Astrocyte of the cerebellum (primary cell): ENCODE measurements at regions of chr11 and their contacts with region 1.

Region 1: DNA sequence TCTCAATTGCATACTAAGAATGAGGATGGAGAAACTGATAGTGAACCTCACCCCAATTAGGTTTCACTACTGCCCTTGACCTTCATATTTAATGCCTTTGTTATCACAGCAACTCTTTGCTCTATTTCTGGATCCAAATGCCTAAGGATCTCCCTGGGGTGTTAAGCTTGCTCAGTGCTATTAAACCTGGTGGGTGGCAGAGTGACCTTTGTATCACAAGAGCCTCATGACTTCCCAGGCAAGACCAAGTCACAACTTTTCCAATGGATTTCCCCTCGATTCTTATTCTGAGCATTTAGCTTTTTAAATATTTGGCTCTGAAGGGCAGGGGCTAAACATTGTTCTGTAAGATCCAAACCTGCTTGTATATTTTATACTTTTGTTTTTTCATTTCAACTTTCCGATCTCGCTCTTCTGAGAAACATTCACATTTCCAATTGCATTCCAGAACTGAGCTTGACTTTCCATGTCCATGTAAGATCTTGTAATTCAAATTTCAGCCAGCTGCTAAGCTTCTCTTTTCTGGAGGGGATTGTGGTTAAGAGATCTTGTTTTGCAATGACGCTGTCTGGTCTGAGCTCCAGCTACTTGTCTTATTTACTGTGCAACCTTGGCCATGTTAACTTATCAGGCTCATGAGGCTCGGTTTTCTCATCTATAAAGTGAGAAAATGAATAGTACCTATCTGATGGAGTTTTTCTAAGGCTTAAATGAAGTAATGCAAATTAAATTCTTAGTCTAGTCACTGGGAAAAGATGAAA is 6.4 kb upstream of the EHF start:
- DNase-seq: no peak
- H3K4me3 ChIP-seq: no peak overlapping the region
- CTCF ChIP-seq: no peak

Region 2: GRCh38 chr11:34890812-34891211 is 276.3 kb after region 1 on chr11:
- in situ Hi-C with region 1: loop called (anchors 25 kb)
- DNase-seq: peak; percentile 47
- H3K4me3 ChIP-seq: no peak overlapping the region
- CTCF ChIP-seq: peak; percentile 24